Activated CD4-positive, alpha-beta memory T cell treated with anti-CD3 and anti-CD28 coated beads for 36 hours (primary cell): ENCODE measurements at regions of chr4 and their contacts with region 1.

Region 1: GRCh38 chr4:7939377-7940108 is at the start of gene AFAP1:
- DNase-seq: peak; percentile 91
- H3K4me3 Mint-ChIP-seq: peak within 1 kb of the TSS; percentile 76
- H3K27ac Mint-ChIP-seq: no peak within 1 kb of the TSS
- H3K4me1 Mint-ChIP-seq: peaks cover 31% of the 10 kb centered on the region
- H3K27me3 Mint-ChIP-seq: no peaks in the 10 kb centered on the region
- total RNA-seq, gene AFAP1: 37.7 to 38.4 TPM

Region 2: DNA sequence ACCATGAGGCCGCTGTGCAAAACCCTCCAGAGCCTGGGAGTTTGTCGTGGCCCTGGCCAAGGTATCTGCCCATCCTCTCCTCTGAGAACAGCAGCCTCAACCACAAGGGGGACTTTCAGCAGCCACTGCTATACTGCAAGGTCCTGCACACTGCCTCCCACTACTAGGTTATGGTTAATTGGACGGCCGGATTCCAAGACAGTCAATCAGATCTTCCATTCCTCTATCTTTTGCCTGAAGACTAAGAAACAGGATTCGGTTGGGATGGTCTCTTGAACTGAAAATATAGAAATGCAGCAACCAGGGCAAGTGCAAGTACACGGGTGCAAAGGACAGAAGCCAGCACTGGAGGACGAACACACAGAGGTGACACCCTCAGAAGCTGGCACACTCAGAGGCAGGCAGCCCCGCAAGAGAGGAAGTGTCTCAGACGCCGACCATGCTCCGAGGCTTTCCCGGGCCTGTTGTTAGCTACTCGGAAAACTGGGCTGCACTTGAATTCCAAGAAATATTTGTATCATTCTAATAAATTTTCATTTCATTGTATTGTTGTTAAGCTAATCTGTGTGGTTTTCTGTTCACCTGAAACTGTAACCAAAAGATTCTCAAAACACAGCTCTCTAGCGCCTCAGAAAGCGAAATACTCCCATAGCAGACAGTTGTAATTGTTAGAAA is 63.2 kb before region 1 on chr4:
- CTCF ChIA-PET with region 1: interaction called, 8 read pairs
- POLR2A ChIA-PET with region 1: interaction called, 3 read pairs
- intact Hi-C with region 1: loop called (anchors 2 kb)
- DNase-seq: peak; percentile 65
- H3K4me3 Mint-ChIP-seq: peak overlapping the region; percentile 58
- H3K27ac Mint-ChIP-seq: peak overlapping the region; percentile 66
- H3K4me1 Mint-ChIP-seq: peaks cover 62% of the 10 kb centered on the region
- H3K27me3 Mint-ChIP-seq: no peaks in the 10 kb centered on the region

Region 3: GRCh38 chr4:7973545-7973981 is 34.0 kb after region 1 on chr4:
- CTCF ChIA-PET with region 1: interaction called, 4 read pairs
- POLR2A ChIA-PET with region 1: interaction called, 5 read pairs
- intact Hi-C with region 1: loop called (anchors 5 kb)
- DNase-seq: peak; percentile 65
- H3K4me3 Mint-ChIP-seq: peak overlapping the region; percentile 98
- H3K27ac Mint-ChIP-seq: peak overlapping the region; percentile 100
- H3K4me1 Mint-ChIP-seq: peaks cover 47% of the 10 kb centered on the region
- H3K27me3 Mint-ChIP-seq: no peaks in the 10 kb centered on the region

Region 4: GRCh38 chr4:7995135-7995534 is 55.6 kb after region 1 on chr4:
- CTCF ChIA-PET with region 1: no interaction called
- POLR2A ChIA-PET with region 1: no interaction called
- intact Hi-C with region 1: no loop called
- DNase-seq: no peak
- H3K4me3 Mint-ChIP-seq: no peak overlapping the region
- H3K27ac Mint-ChIP-seq: no peak overlapping the region
- H3K4me1 Mint-ChIP-seq: no peaks in the 10 kb centered on the region
- H3K27me3 Mint-ChIP-seq: no peaks in the 10 kb centered on the region